OCI-LY7 (cell line): ENCODE measurements at regions of chr10 and their contacts with region 1.

Region 1: GRCh38 chr10:27540351-27541071 is 36.4 kb downstream of the RAB18 start:
- DNase-seq: no peak
- H3K4me3 ChIP-seq: no peak overlapping the region
- H3K27ac ChIP-seq: no peak overlapping the region
- H3K4me1 ChIP-seq: no peaks in the 10 kb centered on the region
- CTCF ChIP-seq: no peak

Region 2: GRCh38 chr10:27504007-27504807 is 36.3 kb before region 1 on chr10 and contains the start of gene RAB18:
- CTCF ChIA-PET with region 1: no interaction called
- POLR2A ChIA-PET with region 1: interaction called, 11 read pairs
- intact Hi-C with region 1: no loop called
- DNase-seq: peak; percentile 99
- H3K4me3 ChIP-seq: peak within 1 kb of the TSS; percentile 97
- H3K27ac ChIP-seq: peak within 1 kb of the TSS; percentile 54
- H3K4me1 ChIP-seq: peaks cover 14% of the 10 kb centered on the region
- CTCF ChIP-seq: peak; percentile 38; the same call in 1 of the 2 replicates
- total RNA-seq, gene RAB18: 8.1 and 12.2 TPM in 2 replicates